Endothelial cell of umbilical vein (primary cell): ENCODE measurements at regions of chr4 and their contacts with region 1.

Region 1: GRCh38 chr4:158722917-158723793 is at the start of gene PPID:
- DNase-seq: peak; percentile 80
- H3K4me3 ChIP-seq: peak within 1 kb of the TSS; percentile 67 to 87 (median 76)
- H3K27ac ChIP-seq: peak within 1 kb of the TSS; percentile 68
- H3K4me1 ChIP-seq: peaks cover 8% of the 10 kb centered on the region
- H3K27me3 ChIP-seq: no peaks in the 10 kb centered on the region
- CTCF ChIP-seq: no peak
- POLR2A ChIP-seq: peak; percentile 93
- total RNA-seq, gene PPID: 24.7 and 25.7 TPM in 2 replicates

Region 2: DNA sequence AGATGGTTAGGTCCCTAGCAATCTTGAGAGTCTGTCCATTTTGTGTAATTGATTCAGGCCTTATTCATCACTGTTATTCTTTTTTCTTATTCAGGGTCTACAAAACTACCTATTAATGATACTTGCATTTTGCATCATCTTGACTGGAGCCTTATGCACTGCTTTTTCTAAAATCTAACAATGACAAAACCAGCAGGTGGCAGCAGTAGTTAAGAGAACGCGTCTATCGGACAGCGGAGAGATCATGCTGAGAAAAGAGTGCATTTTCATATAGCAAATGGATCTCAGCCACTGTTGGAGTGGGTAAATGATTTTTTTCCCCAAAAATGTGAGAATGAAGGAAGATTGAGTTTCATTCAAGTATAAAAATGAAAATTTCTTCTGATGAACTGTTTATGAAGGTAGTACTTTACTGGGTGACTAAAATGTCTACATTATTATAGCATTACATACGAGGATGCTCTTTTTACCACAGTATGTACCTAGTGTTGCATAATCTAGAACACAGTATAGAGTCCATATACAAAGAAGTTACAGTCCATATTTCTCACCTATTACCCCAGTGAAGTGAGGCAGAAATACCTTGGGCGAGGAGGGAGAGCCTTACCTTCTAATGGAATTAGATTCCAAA is 469.7 kb before region 1 on chr4:
- CTCF ChIA-PET with region 1: no interaction called
- POLR2A ChIA-PET with region 1: no interaction called
- dilution Hi-C with region 1: no loop called
- intact Hi-C with region 1: loop called (anchors 5 kb)
- DNase-seq: peak; percentile 71
- H3K4me3 ChIP-seq: no peak overlapping the region
- H3K27ac ChIP-seq: no peak overlapping the region
- H3K4me1 ChIP-seq: no peaks in the 10 kb centered on the region
- H3K27me3 ChIP-seq: no peaks in the 10 kb centered on the region
- CTCF ChIP-seq: peak; percentile 60
- POLR2A ChIP-seq: no peak

Region 3: GRCh38 chr4:158768555-158769174 is 45.5 kb after region 1 on chr4 and contains the start of gene FNIP2:
- CTCF ChIA-PET with region 1: interaction called, 3 read pairs
- POLR2A ChIA-PET with region 1: no interaction called
- dilution Hi-C with region 1: no loop called
- intact Hi-C with region 1: loop called (anchors 2 kb)
- DNase-seq: peak; percentile 80
- H3K4me3 ChIP-seq: peak within 1 kb of the TSS; percentile 59 to 80 (median 75)
- H3K27ac ChIP-seq: peak within 1 kb of the TSS; percentile 68
- H3K4me1 ChIP-seq: peaks cover 31% of the 10 kb centered on the region
- H3K27me3 ChIP-seq: no peaks in the 10 kb centered on the region
- CTCF ChIP-seq: no peak
- POLR2A ChIP-seq: peak; percentile 53
- total RNA-seq, gene FNIP2: 13.6 and 14.4 TPM in 2 replicates

Region 4: DNA sequence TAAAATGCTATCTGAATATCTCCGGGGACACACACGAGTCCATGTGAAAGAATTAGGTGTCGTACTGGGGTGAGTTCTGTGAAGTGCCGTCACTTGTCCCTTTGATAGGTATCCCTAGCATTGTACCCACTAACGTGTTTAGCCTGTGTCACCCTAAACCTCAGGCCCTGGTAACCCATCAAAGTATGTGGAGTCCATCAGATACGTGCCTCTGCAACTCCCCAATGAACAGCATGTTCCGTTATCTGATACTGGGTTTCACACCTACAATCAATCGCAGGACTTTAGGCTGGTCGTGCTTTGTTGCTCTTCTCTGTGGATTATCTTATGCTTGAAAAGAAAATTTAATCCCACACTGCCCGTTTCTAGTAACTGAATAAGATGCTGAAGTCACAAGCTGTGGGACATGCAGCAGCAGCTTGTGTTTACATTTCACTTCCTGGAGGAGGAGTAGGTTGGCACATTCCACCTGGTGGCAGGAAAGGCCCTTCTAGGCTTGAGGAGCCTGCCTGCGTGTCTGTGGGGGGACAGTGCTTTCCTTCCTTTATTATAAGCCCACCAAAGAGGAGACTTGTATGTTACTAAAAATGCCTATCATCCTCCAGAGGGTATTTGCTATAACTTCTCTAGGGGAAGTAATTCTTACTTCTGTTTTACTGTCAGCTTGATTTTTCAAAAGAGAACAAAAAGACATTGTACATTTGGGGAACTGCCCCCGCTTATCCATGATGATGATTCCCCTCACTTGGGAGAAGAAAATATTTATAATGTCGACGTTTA is 172.8 kb after region 1 on chr4:
- CTCF ChIA-PET with region 1: no interaction called
- POLR2A ChIA-PET with region 1: no interaction called
- dilution Hi-C with region 1: no loop called
- intact Hi-C with region 1: no loop called
- DNase-seq: peak; percentile 49
- H3K4me3 ChIP-seq: peak overlapping the region in 1 of 3 experiments; percentile 1
- H3K27ac ChIP-seq: peak overlapping the region; percentile 56
- H3K4me1 ChIP-seq: peaks cover 11% of the 10 kb centered on the region
- H3K27me3 ChIP-seq: no peaks in the 10 kb centered on the region
- CTCF ChIP-seq: peak in 1 of 2 donors; percentile 15
- POLR2A ChIP-seq: no peak

Region 5: DNA sequence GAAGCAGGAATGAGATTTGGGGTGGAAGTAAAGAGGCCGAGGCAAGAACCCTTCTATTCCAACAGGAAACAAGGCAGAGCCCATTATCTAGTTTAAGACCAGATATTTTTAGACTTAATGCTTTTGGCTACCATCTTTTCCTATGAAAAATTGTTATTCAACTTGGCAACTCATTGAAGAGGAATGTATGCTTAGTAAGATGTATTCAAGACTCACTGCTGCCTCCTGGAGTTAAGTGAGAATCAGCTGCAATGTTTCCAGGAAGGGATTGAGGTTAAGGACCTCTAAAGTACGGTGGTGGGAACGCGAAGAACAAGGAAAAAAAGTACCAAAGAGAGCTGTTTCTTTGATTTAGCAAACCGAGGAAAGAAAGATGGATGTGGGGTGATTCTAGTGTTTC is 468.8 kb after region 1 on chr4:
- CTCF ChIA-PET with region 1: interaction called, 4 read pairs
- POLR2A ChIA-PET with region 1: no interaction called
- dilution Hi-C with region 1: no loop called
- intact Hi-C with region 1: loop called (anchors 5 kb)
- DNase-seq: peak; percentile 31
- H3K4me3 ChIP-seq: no peak overlapping the region
- H3K27ac ChIP-seq: peak overlapping the region; percentile 24
- H3K4me1 ChIP-seq: peaks cover 21% of the 10 kb centered on the region
- H3K27me3 ChIP-seq: no peaks in the 10 kb centered on the region
- CTCF ChIP-seq: peak; percentile 13 to 38
- POLR2A ChIP-seq: no peak